CD4-positive, alpha-beta memory T cell (primary cell): ENCODE measurements at regions of chr2 and their contacts with region 1.

Region 1: GRCh38 chr2:136117909-136118818 is at the start of gene CXCR4:
- DNase-seq: peak; percentile 85 to 96 (median 90)
- H3K4me3 ChIP-seq: peak within 1 kb of the TSS; percentile 65 to 95
- H3K4me3 Mint-ChIP-seq: peak within 1 kb of the TSS; percentile 98 to 100 (median 99)
- H3K27ac ChIP-seq: peak within 1 kb of the TSS; percentile 94
- H3K27ac Mint-ChIP-seq: peak within 1 kb of the TSS; percentile 99 to 100 (median 99)
- H3K4me1 ChIP-seq: peaks cover 44% of the 10 kb centered on the region
- H3K4me1 Mint-ChIP-seq: peaks cover 38 to 95% (median 55%) of the 10 kb centered on the region in 4 donors
- H3K27me3 ChIP-seq: no peaks in the 10 kb centered on the region
- H3K27me3 Mint-ChIP-seq: no peaks in the 10 kb centered on the region
- total RNA-seq, gene CXCR4: 306 to 308 TPM

Region 2: DNA sequence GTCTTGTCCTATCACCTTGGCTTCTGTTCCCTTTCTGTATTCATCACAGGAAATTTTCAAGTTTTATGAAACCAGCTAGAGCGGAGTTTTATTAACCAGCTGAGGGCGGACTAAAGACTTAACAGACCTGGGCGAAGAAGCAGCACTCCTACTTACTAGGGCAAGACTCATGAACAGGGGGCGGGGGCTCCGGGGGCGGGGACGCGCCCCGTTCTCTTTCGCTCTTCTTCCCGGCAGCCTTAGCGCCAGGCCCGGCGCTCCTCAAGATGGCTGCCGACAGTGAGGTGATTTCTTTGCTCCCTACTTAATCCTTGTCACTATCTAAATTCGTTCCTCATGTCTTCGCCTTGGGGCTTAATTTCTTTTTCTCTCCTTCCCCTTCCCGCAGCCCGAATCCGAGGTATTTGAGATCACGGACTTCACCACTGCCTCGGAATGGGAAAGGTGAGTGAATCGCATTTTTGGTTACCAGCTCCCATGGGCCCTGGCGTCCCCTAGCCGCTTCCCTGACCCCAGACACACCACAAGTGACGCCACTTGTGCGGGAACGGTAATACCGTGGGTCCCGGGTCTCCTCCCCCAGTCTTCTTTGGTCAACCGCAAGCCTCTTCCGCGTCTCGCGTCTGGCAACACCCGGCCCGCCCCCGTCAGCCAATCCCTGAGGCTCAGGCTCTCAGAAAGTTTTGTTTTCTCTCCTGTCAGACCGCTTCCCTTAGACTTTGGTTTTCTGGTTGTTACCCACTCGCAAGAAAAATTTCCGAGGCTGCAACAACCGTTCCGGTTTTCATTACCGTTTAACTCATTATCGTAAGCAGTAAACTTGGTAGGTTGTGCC is 1065.9 kb before region 1 on chr2 and contains the start of gene RAB3GAP1:
- CTCF ChIA-PET with region 1: no interaction called
- POLR2A ChIA-PET with region 1: no interaction called
- intact Hi-C with region 1: loop called (anchors 5 kb)
- DNase-seq: peak; percentile 92 to 97 (median 94)
- H3K4me3 ChIP-seq: peak within 1 kb of the TSS; percentile 98 to 99
- H3K4me3 Mint-ChIP-seq: peak within 1 kb of the TSS; percentile 92 to 99 (median 98)
- H3K27ac ChIP-seq: peak within 1 kb of the TSS; percentile 97
- H3K27ac Mint-ChIP-seq: peak within 1 kb of the TSS; percentile 97 to 100 (median 100)
- H3K4me1 ChIP-seq: peaks cover 38% of the 10 kb centered on the region
- H3K4me1 Mint-ChIP-seq: peaks cover 23 to 48% (median 35%) of the 10 kb centered on the region in 4 donors
- H3K27me3 ChIP-seq: no peaks in the 10 kb centered on the region
- H3K27me3 Mint-ChIP-seq: no peaks in the 10 kb centered on the region
- total RNA-seq, gene RAB3GAP1: 45.1 to 46.7 TPM

Region 3: DNA sequence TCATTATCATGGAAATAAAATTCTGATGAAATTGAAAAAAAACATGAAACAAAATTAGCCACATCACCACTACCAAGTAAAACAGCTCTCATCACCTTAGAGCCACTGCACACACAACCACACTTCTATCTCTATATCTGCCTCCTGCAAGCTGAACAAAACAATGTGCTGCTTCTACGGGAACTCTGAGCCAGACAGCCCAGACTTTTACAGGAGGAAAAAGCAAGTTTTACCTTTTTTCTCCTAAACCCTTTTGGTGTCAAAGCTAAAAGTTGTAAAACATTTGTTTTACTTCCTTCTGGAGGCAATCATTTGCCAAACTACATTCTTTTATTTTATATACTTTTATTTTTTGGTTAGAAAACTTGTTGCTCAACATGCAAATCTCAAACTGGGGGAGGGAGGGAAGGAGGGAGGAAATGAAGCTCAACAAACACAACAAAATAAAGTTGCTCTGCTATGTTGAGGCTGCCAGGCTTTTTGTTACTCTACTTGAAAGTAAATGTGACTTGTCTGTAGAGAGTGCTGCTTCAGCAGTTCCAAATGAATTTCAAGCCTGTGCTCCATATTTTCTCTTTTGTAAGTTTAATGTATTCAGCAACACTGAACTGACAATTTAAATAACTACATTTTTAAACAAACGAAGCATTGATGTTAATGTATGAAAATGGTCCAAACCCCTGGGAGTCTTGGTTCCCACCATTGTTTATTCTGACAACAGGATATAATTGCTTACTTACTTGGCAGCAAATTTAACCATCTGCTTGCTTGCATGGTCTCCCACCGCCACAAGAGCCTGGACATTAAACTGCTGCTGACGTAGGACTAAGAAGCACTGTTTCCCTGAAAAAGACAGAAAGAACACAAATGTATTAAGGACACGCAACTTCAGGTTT is 157.3 kb before region 1 on chr2:
- CTCF ChIA-PET with region 1: no interaction called
- POLR2A ChIA-PET with region 1: interaction called, 10 read pairs
- intact Hi-C with region 1: loop called (anchors 5 kb)
- DNase-seq: peak; percentile 38 to 55 (median 43)
- H3K4me3 ChIP-seq: peak overlapping the region in 1 of 2 donors; percentile 6
- H3K4me3 Mint-ChIP-seq: peak overlapping the region; percentile 9 to 79 (median 53)
- H3K27ac ChIP-seq: peak overlapping the region; percentile 60
- H3K27ac Mint-ChIP-seq: peak overlapping the region; percentile 76 to 96 (median 89)
- H3K4me1 ChIP-seq: peaks cover 49% of the 10 kb centered on the region
- H3K4me1 Mint-ChIP-seq: peaks cover 44 to 70% (median 55%) of the 10 kb centered on the region in 4 donors
- H3K27me3 ChIP-seq: no peaks in the 10 kb centered on the region
- H3K27me3 Mint-ChIP-seq: no peaks in the 10 kb centered on the region

Region 4: DNA sequence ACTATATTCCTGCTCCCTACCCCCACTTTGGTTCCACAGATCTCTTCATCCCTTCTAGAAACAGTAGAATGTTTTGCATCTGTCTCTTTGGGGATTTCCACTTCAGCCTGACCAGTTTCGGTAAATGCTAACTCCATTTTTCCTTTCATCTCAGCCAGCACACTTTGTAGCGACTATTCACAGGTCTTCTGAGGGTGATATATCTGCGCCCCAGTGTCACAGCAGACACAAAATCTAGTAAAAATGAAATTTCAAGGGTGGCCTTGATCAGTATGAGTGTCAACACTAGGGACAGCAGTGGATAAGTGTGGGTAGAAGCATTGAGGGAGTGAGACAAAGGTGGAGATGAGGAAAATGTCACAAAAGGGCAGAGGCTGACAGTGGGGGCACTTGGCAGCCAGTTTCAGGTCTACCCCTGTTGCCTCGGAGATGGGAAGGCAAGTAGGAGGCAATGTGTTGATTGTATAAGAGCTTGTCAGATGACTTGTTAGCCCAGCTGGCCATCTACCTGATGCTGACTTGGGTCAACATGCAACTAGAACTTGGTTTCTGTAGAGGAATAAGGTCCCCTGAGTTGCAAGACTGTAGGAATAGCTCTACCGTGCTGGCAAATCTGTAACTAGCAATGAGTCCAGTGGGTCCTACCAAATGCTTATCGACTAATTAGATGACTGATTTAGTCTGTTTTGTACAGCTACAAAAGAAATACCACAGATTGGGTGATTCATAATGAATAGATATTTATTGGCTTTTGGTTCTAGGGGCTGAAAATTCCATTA is 61.0 kb before region 1 on chr2:
- CTCF ChIA-PET with region 1: interaction called, 3 read pairs
- POLR2A ChIA-PET with region 1: interaction called, 8 read pairs
- intact Hi-C with region 1: loop called (anchors 2 kb)
- DNase-seq: peak; percentile 17 to 52 (median 37)
- H3K4me3 ChIP-seq: peak overlapping the region in 1 of 2 donors; percentile 6
- H3K4me3 Mint-ChIP-seq: peak overlapping the region in 7 of 8 donors; percentile 60 to 73 (median 69)
- H3K27ac ChIP-seq: peak overlapping the region; percentile 42
- H3K27ac Mint-ChIP-seq: peak overlapping the region; percentile 59 to 92 (median 90)
- H3K4me1 ChIP-seq: peaks cover 71% of the 10 kb centered on the region
- H3K4me1 Mint-ChIP-seq: peaks cover 51 to 80% (median 61%) of the 10 kb centered on the region in 4 donors
- H3K27me3 ChIP-seq: no peaks in the 10 kb centered on the region
- H3K27me3 Mint-ChIP-seq: no peaks in the 10 kb centered on the region

Region 5: GRCh38 chr2:136075466-136075865 is 42.7 kb before region 1 on chr2:
- CTCF ChIA-PET with region 1: no interaction called
- POLR2A ChIA-PET with region 1: no interaction called
- intact Hi-C with region 1: no loop called
- DNase-seq: no peak
- H3K4me3 ChIP-seq: no peak overlapping the region
- H3K4me3 Mint-ChIP-seq: no peak overlapping the region
- H3K27ac ChIP-seq: no peak overlapping the region
- H3K27ac Mint-ChIP-seq: no peak overlapping the region
- H3K4me1 ChIP-seq: peaks cover 7% of the 10 kb centered on the region
- H3K4me1 Mint-ChIP-seq: no peaks in the 10 kb centered on the region
- H3K27me3 ChIP-seq: no peaks in the 10 kb centered on the region
- H3K27me3 Mint-ChIP-seq: no peaks in the 10 kb centered on the region

Region 6: DNA sequence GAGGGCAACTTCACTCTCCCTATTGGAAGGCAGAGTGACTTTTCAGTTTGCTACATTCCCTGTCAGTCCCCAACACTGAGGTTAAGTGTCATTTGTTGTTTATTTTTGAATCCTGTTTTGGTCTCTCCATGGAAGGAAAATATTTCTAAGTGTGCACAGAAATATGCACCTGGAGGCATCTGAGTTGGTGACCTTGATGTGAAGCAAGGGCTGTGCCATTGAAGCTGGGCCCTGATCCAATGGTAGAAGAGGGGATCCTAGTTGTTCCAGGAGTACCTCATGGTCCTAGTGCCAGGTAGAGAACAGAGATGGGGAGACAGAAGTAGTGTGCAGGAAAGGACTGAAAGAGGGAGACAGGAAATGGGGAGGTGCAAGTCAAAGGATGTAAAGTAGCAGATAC is 53.8 kb after region 1 on chr2:
- CTCF ChIA-PET with region 1: no interaction called
- POLR2A ChIA-PET with region 1: interaction called, 4 read pairs
- intact Hi-C with region 1: loop called (anchors 1 kb)
- DNase-seq: no peak
- H3K4me3 ChIP-seq: no peak overlapping the region
- H3K4me3 Mint-ChIP-seq: peak overlapping the region in 3 of 8 donors; percentile 46 to 60 (median 55)
- H3K27ac ChIP-seq: no peak overlapping the region
- H3K27ac Mint-ChIP-seq: peak overlapping the region in 4 of 7 donors; percentile 61 to 86 (median 76)
- H3K4me1 ChIP-seq: peaks cover 5% of the 10 kb centered on the region
- H3K4me1 Mint-ChIP-seq: peaks cover 8 to 27% (median 10%) of the 10 kb centered on the region in 4 donors
- H3K27me3 ChIP-seq: no peaks in the 10 kb centered on the region
- H3K27me3 Mint-ChIP-seq: no peaks in the 10 kb centered on the region

Region 7: GRCh38 chr2:136238286-136239078 is 120.3 kb after region 1 on chr2:
- CTCF ChIA-PET with region 1: interaction called, 6 read pairs
- POLR2A ChIA-PET with region 1: interaction called, 126 read pairs
- intact Hi-C with region 1: loop called (anchors 2 kb)
- DNase-seq: peak; percentile 72 to 83 (median 75)
- H3K4me3 ChIP-seq: no peak overlapping the region
- H3K4me3 Mint-ChIP-seq: peak overlapping the region; percentile 4 to 75 (median 40)
- H3K27ac ChIP-seq: peak overlapping the region; percentile 39
- H3K27ac Mint-ChIP-seq: peak overlapping the region; percentile 73 to 99 (median 95)
- H3K4me1 ChIP-seq: peaks cover 51% of the 10 kb centered on the region
- H3K4me1 Mint-ChIP-seq: peaks cover 40 to 62% (median 54%) of the 10 kb centered on the region in 4 donors
- H3K27me3 ChIP-seq: no peaks in the 10 kb centered on the region
- H3K27me3 Mint-ChIP-seq: no peaks in the 10 kb centered on the region

Region 8: GRCh38 chr2:136297994-136298393 is 179.8 kb after region 1 on chr2:
- CTCF ChIA-PET with region 1: no interaction called
- POLR2A ChIA-PET with region 1: no interaction called
- intact Hi-C with region 1: no loop called
- DNase-seq: no peak
- H3K4me3 ChIP-seq: no peak overlapping the region
- H3K4me3 Mint-ChIP-seq: no peak overlapping the region
- H3K27ac ChIP-seq: no peak overlapping the region
- H3K27ac Mint-ChIP-seq: no peak overlapping the region
- H3K4me1 ChIP-seq: no peaks in the 10 kb centered on the region
- H3K4me1 Mint-ChIP-seq: peaks cover 0 to 4% (median 2%) of the 10 kb centered on the region in 4 donors
- H3K27me3 ChIP-seq: no peaks in the 10 kb centered on the region
- H3K27me3 Mint-ChIP-seq: peaks cover 0 to under 1% of the 10 kb centered on the region in 2 donors

Region 9: GRCh38 chr2:136378712-136379595 is 260.8 kb after region 1 on chr2:
- CTCF ChIA-PET with region 1: interaction called, 5 read pairs
- POLR2A ChIA-PET with region 1: interaction called, 13 read pairs
- intact Hi-C with region 1: loop called (anchors 1 kb)
- DNase-seq: peak; percentile 71 to 78 (median 74)
- H3K4me3 ChIP-seq: no peak overlapping the region
- H3K4me3 Mint-ChIP-seq: no peak overlapping the region
- H3K27ac ChIP-seq: no peak overlapping the region
- H3K27ac Mint-ChIP-seq: peak overlapping the region in 6 of 7 donors; percentile 70 to 89 (median 78)
- H3K4me1 ChIP-seq: peaks cover 55% of the 10 kb centered on the region
- H3K4me1 Mint-ChIP-seq: peaks cover 49 to 79% (median 53%) of the 10 kb centered on the region in 4 donors
- H3K27me3 ChIP-seq: no peaks in the 10 kb centered on the region
- H3K27me3 Mint-ChIP-seq: no peaks in the 10 kb centered on the region